Panc1 (cell line): ENCODE measurements at regions of chr7 and their contacts with region 1.

Region 1: DNA sequence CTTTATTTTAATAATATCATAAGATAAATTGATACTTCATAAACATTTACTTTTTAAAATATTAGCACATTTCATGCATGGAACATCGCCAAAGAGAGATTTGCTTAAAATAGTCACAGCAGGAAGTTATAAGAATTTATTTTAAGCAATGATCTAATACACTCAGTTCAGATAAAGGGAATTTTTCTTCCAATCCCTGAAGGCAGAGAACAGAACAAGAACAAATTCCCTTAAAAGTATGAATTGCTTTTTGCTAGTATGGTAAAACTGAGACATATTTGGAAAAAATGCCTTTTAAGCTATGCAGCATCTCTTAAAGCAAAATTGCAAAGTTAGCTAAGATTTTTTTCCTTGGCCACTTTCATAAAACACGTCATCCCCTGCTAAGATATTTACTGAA is 91.0 kb downstream of the SEMA3D start:
- DNase-seq: no peak
- ATAC-seq: no peak
- H3K4me3 ChIP-seq: no peak overlapping the region
- H3K27ac ChIP-seq: no peak overlapping the region
- H3K4me1 ChIP-seq: no peaks in the 10 kb centered on the region
- H3K27me3 ChIP-seq: no peaks in the 10 kb centered on the region
- CTCF ChIP-seq: no peak

Region 2: DNA sequence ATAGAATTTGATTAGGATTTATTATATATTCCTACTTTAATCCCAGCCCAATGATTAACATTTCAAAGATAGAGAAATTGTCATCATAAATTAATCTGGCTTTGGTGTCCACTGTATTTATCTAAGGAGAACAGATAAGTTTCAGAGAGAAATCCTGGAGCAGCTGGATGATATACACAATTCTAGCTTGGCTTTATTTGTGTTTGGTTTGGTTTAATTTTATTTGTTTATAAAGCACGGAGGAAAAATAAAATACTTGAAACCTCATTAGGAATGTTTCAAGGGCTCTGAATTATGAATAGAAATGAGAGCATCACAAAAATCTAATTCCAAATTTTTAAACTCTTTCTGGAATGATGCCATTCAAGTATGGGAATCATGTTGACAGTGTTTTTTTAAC is 49.0 kb after region 1 on chr7:
- CTCF ChIA-PET with region 1: no interaction called
- POLR2A ChIA-PET with region 1: no interaction called
- in situ Hi-C with region 1: no loop called
- intact Hi-C with region 1: loop called (anchors 5 kb)
- DNase-seq: no peak
- ATAC-seq: no peak
- H3K4me3 ChIP-seq: no peak overlapping the region
- H3K27ac ChIP-seq: no peak overlapping the region
- H3K4me1 ChIP-seq: no peaks in the 10 kb centered on the region; the same call in 1 of the 2 replicates
- H3K27me3 ChIP-seq: no peaks in the 10 kb centered on the region
- CTCF ChIP-seq: no peak